Adrenal gland (tissue), 19 donors: ENCODE measurements at regions of chr2 and their contacts with region 1.

Region 1: DNA sequence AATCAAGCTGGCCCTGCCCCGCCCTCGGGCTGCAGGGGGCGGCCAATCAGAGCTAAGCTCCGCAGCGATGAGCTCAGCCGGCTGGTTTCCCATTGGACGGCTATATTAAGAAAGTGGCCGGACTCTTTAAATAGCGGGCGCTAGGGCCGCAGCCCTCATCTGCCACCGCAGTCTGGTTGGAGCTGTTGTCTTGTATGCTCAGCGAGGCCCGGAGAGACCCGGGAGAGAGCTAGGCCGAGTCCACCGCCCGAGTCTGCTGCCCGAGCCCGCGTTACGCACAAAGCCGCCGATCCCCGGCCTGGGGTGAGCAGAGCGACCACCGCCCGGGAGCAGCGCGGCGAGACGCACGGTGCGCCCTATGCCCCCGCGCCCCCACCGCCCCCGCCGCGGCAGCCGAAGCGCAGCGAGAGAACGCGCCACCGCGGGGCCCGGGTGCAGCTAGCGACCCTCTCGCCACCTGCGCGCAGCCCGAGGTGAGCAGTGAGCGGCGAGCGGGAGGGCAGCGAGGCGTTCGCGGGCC is at the start of gene RHOB:
- DNase-seq: peak; percentile 97 to 100 (median 99)
- H3K4me3 ChIP-seq: peak within 1 kb of the TSS; percentile 77 to 99 (median 90)
- H3K27ac ChIP-seq: peak within 1 kb of the TSS; percentile 95 to 99 (median 98)
- H3K4me1 ChIP-seq: peaks cover 40% of the 10 kb centered on the region in 2 donors
- H3K27me3 ChIP-seq: no peaks in the 10 kb centered on the region
- CTCF ChIP-seq: peak in 1 of 6 experiments; percentile 36
- POLR2A ChIP-seq: peak; percentile 100
- total RNA-seq, gene RHOB: 299 to 1,281 (median 728) TPM

Region 2: GRCh38 chr2:20264629-20265028 is 182.3 kb before region 1 on chr2:
- intact Hi-C with region 1: no loop called
- DNase-seq: no peak
- H3K4me3 ChIP-seq: no peak overlapping the region
- H3K27ac ChIP-seq: no peak overlapping the region
- H3K4me1 ChIP-seq: peaks cover 0 to 10% of the 10 kb centered on the region in 2 donors
- H3K27me3 ChIP-seq: no peaks in the 10 kb centered on the region
- CTCF ChIP-seq: no peak
- POLR2A ChIP-seq: no peak

Region 3: GRCh38 chr2:20487400-20488174 is 40.6 kb after region 1 on chr2:
- intact Hi-C with region 1: loop called in 1 of 2 experiments (anchors 5 kb)
- DNase-seq: peak in 1 of 7 donors; percentile 31
- H3K4me3 ChIP-seq: no peak overlapping the region
- H3K27ac ChIP-seq: peak overlapping the region in 2 of 5 donors; percentile 13 to 38
- H3K4me1 ChIP-seq: peaks cover 20 to 49% of the 10 kb centered on the region in 2 donors
- H3K27me3 ChIP-seq: no peaks in the 10 kb centered on the region
- CTCF ChIP-seq: no peak
- POLR2A ChIP-seq: no peak